OCI-LY7 (cell line): ENCODE measurements at regions of chr6 and their contacts with region 1.

Region 1: GRCh38 chr6:122730775-122731386 is 48.6 kb upstream of the FABP7 start:
- DNase-seq: peak; percentile 18
- H3K4me3 ChIP-seq: no peak overlapping the region
- H3K27ac ChIP-seq: no peak overlapping the region
- H3K4me1 ChIP-seq: no peaks in the 10 kb centered on the region
- CTCF ChIP-seq: peak; percentile 89

Region 2: DNA sequence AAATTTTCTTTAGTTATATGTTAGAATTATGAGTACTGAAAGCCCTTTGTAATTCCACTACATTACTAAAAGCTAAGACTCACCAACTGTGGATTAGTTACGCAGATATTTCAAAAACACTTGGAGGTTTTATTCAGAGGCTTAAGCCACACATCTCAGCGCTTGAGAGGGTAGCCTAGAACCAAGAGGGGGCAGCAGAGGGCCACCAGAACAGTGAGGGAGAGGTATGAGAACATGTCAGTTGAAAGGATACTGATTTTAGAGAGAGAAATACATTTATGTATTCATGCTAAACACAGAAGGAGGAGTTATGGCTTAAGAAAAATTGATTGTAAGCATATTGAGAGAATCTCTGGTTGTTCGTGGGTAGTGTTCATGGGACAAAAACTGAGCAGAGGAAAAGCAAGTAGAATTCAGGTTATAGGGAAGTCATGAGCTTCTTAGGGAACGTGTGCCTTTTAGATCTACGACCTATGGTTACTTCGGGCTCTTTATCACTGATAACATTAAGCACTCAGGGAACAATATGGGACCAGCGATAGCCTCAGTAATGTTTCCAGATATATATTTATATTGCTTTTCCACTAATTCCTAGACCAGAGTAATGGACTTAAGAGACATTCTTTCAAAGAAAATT is 238.8 kb before region 1 on chr6:
- CTCF ChIA-PET with region 1: no interaction called
- POLR2A ChIA-PET with region 1: no interaction called
- intact Hi-C with region 1: loop called (anchors 10 kb)
- DNase-seq: peak; percentile 63
- H3K4me3 ChIP-seq: no peak overlapping the region
- H3K27ac ChIP-seq: no peak overlapping the region
- H3K4me1 ChIP-seq: no peaks in the 10 kb centered on the region
- CTCF ChIP-seq: peak; percentile 96

Region 3: DNA sequence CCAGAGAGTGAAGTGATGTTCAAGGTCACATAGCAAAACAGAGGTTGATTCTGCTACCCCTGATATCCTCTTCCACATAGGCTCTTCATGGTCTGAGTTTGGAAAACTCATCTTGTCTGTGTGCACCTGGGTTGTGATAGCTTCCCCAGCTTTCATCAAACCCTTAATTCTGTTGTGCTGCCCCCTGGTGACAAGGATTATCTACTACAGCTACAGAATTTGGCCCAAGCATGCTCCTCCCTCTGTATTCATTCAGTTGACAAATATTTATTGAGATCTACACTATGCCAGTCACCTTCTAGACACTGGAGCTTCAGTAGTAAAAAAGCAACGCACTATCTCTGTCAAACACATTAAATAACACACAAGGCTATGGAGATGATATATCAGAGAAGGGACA is 108.6 kb after region 1 on chr6:
- CTCF ChIA-PET with region 1: interaction called, 7 read pairs
- POLR2A ChIA-PET with region 1: no interaction called
- intact Hi-C with region 1: loop called (anchors 1 kb)
- DNase-seq: peak; percentile 41
- H3K4me3 ChIP-seq: no peak overlapping the region
- H3K27ac ChIP-seq: no peak overlapping the region
- H3K4me1 ChIP-seq: no peaks in the 10 kb centered on the region
- CTCF ChIP-seq: peak; percentile 79

Region 4: DNA sequence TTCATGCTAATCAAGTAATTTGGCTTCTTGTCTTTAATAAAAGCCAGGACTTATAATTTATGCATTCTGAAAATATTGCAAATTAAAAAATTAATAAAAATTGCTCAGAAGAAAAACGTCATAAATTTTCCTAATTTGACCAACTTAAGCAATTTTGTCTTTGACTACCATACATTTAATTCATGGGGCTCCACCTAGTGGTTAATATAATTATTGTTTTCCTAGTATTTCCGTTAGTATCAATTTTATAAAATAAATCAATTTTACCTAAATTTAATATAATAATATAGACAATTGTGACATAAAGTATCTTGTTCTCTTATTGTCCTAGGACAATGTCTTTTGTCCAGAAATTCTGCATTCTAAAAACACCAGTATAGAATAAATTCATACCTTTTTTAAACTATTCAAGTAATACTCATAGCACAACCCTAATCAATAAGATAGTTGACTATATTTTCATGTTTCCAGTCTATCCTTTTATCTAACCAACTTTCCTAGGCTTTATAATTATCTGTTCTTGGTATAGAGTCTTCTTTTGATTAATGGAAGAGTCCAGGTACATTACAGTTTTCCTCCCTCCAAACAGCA is 585.9 kb after region 1 on chr6:
- CTCF ChIA-PET with region 1: no interaction called
- POLR2A ChIA-PET with region 1: no interaction called
- intact Hi-C with region 1: loop called (anchors 2 kb)
- DNase-seq: peak; percentile 27
- H3K4me3 ChIP-seq: no peak overlapping the region
- H3K27ac ChIP-seq: no peak overlapping the region
- H3K4me1 ChIP-seq: no peaks in the 10 kb centered on the region
- CTCF ChIP-seq: peak; percentile 80